ENCODE measurements at regions of chr12 and their contacts with region 1.

Region 1: DNA sequence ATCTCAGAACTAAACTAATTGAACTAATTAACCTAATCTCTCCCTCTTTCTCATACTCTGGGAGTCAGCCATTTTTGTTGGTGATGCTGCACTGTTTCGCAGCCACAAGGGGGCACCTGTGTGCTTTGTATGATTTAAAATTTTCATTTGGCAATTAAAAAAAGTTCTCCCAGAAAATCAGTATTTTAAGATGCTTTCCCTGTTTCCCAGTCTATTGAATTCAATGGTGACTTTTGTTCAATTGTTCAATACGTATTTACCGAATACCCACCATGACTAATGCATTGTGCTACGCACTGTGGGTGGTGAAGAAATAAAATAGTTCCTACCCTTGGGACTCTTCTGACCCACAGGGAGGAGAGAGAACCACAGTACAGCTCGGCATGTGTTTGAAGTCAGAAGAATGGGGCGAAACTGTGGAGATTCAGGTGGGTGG is 63.7 kb downstream of the ZNF664 start:
- DNase-seq: peak; percentile 69
- H3K4me3 ChIP-seq: peak overlapping the region in 1 of 2 experiments; percentile 6; a peak in 1 of 4 replicates
- H3K27ac ChIP-seq: no peak overlapping the region
- H3K4me1 ChIP-seq: peaks cover 5 to 6% of the 10 kb centered on the region in 2 experiments; a peak in 1 of 4 replicates
- H3K27me3 ChIP-seq: no peaks in the 10 kb centered on the region
- CTCF ChIP-seq: peak; percentile 96
- EP300 ChIP-seq: no peak
- RAD21 ChIP-seq: peak; percentile 98

Region 2: GRCh38 chr12:124020514-124020949 is 16.2 kb before region 1 on chr12:
- CTCF ChIA-PET with region 1: interaction called, 14 read pairs
- POLR2A ChIA-PET with region 1: no interaction called
- DNase-seq: no peak
- H3K4me3 ChIP-seq: no peak overlapping the region
- H3K27ac ChIP-seq: peak overlapping the region in 1 of 2 experiments; percentile 20; a peak in 2 of 4 replicates
- H3K4me1 ChIP-seq: peaks cover 0 to 17% of the 10 kb centered on the region in 2 experiments; a peak in 2 of 4 replicates
- H3K27me3 ChIP-seq: no peaks in the 10 kb centered on the region
- CTCF ChIP-seq: no peak
- EP300 ChIP-seq: no peak
- RAD21 ChIP-seq: no peak

Region 3: DNA sequence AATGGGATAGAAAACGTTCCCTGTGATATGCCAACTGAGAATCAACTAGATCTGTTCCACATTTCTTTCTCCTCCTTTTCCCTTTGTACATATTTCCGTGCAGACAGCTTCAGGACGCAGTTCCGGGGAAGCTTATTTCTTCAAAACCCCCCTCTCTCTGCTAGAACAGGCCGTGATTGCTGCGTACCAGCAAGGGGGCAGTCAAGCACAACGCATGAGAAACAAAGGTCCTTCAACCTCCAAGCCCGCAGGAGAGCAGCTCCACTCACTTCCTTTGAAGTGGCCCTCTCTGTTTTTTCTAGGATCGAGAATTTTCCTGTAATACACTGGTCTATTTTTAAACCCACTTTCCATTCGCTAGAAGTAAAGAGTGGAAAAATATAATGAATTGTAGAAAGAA is 17.2 kb after region 1 on chr12:
- CTCF ChIA-PET with region 1: interaction called, 12 read pairs
- POLR2A ChIA-PET with region 1: no interaction called
- DNase-seq: peak; percentile 44
- H3K4me3 ChIP-seq: no peak overlapping the region; a peak in 1 of 4 replicates
- H3K27ac ChIP-seq: no peak overlapping the region
- H3K4me1 ChIP-seq: peaks cover 0 to 14% of the 10 kb centered on the region in 2 experiments; a peak in 1 of 4 replicates
- H3K27me3 ChIP-seq: no peaks in the 10 kb centered on the region
- CTCF ChIP-seq: peak; percentile 27; the same call in 1 of the 2 replicates
- EP300 ChIP-seq: no peak
- RAD21 ChIP-seq: peak; percentile 70

Region 4: GRCh38 chr12:124321040-124321481 is 284.4 kb after region 1 on chr12:
- CTCF ChIA-PET with region 1: interaction called, 23 read pairs
- POLR2A ChIA-PET with region 1: no interaction called
- DNase-seq: peak; percentile 77
- H3K4me3 ChIP-seq: no peak overlapping the region; a peak in 1 of 4 replicates
- H3K27ac ChIP-seq: no peak overlapping the region
- H3K4me1 ChIP-seq: no peaks in the 10 kb centered on the region
- H3K27me3 ChIP-seq: no peaks in the 10 kb centered on the region
- CTCF ChIP-seq: peak; percentile 80
- EP300 ChIP-seq: no peak
- RAD21 ChIP-seq: peak; percentile 71

Region 5: DNA sequence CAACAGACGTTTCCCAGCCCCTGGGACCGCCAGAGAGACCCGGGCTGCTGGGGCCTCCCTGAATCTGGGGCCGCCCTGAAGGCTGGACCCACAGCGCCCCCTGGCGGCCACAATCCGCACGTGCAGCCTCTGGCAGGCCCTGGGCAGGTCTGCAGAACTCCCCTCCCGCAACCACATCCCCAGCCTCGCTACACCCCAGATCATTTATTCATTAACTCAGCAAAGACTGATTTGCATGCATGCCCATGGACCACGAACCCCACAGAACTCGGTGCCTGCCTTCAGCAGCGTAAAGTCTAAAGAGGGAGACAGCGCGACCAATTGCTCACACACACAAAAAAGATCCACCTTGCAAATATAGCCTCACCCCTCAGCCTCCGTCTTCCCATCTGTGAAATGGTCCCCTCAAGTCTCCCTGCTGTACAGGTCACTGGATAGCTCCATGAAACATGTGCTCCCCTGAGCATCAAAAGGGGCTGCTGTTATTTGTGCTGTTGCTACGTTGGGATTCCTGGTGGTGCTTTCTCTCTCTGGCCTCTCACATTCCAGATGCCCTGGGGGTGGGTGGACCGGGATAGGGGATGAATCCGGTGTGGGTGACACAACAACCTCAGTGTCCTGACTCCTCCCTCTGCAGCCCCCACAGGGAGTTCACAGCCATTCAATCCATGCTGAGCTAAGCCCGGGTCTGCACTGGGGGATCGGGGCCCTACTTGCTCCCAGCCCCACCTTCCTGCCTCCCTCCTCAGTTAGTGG is 730.6 kb after region 1 on chr12:
- CTCF ChIA-PET with region 1: interaction called, 22 read pairs
- POLR2A ChIA-PET with region 1: no interaction called
- DNase-seq: peak; percentile 95
- H3K4me3 ChIP-seq: peak overlapping the region in 1 of 2 experiments; percentile 32; a peak in 1 of 4 replicates
- H3K27ac ChIP-seq: 0 out of 4 replicates have a peak overlapping the region, but pooled peaks of 1 of the 2 experiments have one; percentile 3
- H3K4me1 ChIP-seq: peaks cover 4 to 5% of the 10 kb centered on the region in 2 experiments; a peak in 2 of 4 replicates
- H3K27me3 ChIP-seq: no peaks in the 10 kb centered on the region
- CTCF ChIP-seq: peak; percentile 98
- EP300 ChIP-seq: no peak
- RAD21 ChIP-seq: peak; percentile 95

Measured in SK-N-SH (cell line).